ENCODE measurements at regions of chr10 and their contacts with region 1.

Region 1: DNA sequence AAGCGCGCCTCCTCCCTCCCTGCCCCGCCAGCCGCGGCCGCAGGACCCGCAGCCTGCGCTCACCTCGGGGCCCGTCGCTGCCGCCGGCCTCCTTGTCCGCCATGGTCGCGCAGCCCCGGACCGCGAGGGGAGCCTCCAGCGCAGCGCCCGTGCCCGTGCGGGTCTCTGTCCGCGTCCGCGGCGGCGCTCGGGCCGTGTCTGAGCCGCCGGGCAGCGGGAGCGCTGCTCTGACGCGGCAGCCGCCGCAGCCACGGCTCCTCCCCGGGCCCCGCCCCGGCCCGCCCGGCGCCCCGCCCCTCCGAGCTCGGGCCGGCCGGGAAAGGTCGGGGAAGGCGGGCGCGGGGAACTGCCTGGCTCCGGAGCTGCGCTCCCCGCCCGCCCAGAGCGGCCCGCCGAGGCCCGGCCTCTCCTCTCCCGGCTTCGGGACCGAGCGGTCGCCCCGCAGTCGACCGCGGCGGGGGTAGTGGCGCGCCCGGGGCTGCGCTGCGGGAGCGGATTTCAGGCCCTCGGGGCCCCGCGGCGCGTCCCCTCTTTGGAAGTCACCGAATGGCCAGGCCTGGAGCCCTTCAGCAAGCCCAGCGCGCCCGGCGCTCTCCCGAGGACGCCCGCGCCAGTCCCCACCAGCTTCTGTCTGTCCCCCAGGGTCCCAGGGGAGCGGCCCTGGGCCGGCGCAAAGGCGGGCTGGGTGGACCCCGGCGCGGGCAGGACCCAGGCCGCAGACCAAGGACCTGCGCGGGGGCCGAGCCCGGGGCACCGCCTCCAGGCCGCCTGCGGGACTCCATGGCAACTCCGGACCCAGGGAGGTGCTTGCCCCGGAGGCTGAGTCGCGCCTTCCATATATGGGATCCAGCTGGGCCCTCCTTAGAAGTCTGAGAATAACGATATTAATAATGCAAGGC is at the start of gene HSPA12A:
- DNase-seq: peak; percentile 64 to 96 (median 70)

Region 2: GRCh38 chr10:116690356-116691322 is 52.0 kb before region 1 on chr10:
- intact Hi-C with region 1: loop called (anchors 5 kb)
- DNase-seq: peak; percentile 49 to 94 (median 71)

Region 3: DNA sequence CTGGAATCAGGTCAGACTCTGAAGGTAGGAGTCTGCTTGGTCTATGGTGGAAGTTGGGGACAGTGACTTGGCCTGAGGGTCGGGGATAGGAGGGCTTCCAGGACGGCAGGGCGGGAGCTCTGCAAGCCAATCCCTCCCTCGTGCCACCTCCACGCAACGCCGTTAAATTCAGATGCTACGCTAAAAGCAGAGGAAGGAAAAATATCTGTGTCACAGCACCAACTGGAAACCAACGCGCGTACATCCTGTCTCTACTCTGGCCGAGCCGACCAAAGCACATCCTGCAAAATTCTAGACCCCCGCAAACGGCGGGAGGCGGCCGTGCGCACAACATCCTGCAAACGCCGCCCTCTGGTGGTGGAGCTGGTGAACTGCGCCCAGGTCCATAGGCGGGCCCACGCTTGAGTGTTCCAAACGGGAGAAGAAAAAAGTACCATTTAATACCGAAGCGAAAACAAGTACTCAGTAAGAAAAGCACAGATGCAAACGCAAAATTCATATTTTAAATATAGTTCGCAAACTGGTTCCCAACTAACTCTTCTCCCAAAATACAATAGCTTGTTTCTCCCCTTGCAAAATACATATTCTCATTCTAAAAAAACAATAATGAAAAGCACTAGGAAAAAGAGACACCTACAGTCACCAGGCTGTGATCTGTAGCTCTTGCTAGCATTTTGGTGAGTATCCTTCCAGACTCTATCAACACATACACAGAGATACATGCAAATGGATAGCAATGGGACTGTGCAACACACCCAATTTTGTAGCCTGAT is 45.5 kb after region 1 on chr10:
- intact Hi-C with region 1: loop called (anchors 2 kb)
- DNase-seq: peak; percentile 78 to 98 (median 86)

Region 4: DNA sequence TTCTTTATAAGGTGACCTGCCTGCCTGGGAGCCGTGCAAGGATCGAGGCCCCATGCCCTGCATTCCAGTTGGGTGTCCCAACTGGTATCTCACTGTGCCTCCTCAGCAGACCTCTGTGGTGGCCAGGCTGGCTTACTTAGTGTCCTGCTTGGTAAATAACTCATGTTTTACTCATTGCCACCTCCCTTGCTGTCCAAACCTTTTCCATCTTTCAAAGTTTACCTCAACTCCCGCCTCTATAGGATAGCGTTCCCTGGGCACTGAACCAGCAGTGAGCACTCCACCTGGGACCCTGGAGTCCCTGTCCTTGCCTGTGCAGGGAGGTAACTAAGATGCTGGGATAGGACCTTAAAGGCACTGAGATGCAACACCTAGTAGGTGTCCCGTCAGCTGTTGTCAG is 531.9 kb after region 1 on chr10:
- intact Hi-C with region 1: no loop called
- DNase-seq: no peak

Measured in posterior cingulate gyrus (tissue), 11 donors.